ENCODE measurements at regions of chr11 and their contacts with region 1.

Region 1: GRCh38 chr11:8006349-8006977 is 19.3 kb downstream of the EIF3F start:
- DNase-seq: peak; percentile 67 to 70
- H3K4me3 ChIP-seq: no peak overlapping the region
- H3K27ac ChIP-seq: no peak overlapping the region
- H3K4me1 ChIP-seq: no peaks in the 10 kb centered on the region
- H3K27me3 ChIP-seq: no peaks in the 10 kb centered on the region
- CTCF ChIP-seq: peak; percentile 69 to 97 (median 89)
- POLR2A ChIP-seq: no peak

Region 2: GRCh38 chr11:8092587-8093424 is 86.3 kb after region 1 on chr11:
- intact Hi-C with region 1: loop called (anchors 5 kb)
- DNase-seq: peak; percentile 72 to 75
- H3K4me3 ChIP-seq: no peak overlapping the region
- H3K27ac ChIP-seq: no peak overlapping the region
- H3K4me1 ChIP-seq: no peaks in the 10 kb centered on the region
- H3K27me3 ChIP-seq: no peaks in the 10 kb centered on the region
- CTCF ChIP-seq: peak; percentile 23 to 67 (median 52)
- POLR2A ChIP-seq: no peak

Measured in thyroid gland (tissue), 4 donors.